ENCODE measurements at regions of chr2 and their contacts with region 1.

Region 1: DNA sequence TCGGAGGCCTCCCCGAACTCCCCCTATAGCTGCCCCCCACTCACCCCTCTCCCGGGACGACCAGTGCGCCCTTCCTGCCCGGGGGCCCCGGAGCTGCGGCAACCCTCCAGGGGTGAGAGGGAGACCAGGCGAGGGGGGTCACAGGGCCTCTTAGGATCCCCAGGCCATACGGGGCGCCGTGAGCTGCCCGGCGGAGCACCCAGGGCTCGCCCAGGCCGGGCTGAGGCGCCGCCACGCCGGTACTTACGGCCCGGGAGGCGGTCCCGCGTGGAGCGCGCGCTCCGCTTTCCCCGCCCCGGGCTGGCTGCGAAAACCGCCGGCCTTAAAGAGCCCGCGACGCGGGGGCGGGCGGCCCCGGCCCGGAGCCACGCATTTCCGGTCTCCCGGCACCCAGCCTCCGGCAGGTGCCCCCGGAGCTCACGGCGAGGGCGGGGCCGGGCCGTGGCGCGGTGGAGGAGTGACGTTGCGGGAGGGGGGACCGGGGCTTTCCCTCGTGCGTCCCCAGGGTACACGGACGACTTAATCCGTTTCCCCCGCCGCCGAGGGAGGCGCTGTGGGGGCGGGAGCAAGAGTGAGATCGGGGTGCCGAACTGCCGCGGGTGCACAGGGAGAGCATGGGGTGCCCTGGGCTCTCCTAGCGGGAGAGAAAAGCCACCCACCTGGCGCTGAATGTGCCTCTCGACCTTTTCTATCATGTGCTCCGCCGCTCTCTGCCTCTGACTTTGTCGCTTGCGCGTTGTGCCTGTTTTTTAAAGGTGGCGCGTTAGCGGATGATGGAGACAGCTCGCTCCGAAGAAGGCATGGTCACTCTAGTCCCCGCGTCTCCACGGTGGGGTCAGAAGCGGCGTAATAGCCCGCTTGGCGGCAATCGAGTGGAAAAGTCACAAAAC is at the start of gene METTL21A:
- DNase-seq: peak; percentile 93
- H3K27ac ChIP-seq: peak within 1 kb of the TSS; percentile 96
- CTCF ChIP-seq: peak; percentile 47

Region 2: DNA sequence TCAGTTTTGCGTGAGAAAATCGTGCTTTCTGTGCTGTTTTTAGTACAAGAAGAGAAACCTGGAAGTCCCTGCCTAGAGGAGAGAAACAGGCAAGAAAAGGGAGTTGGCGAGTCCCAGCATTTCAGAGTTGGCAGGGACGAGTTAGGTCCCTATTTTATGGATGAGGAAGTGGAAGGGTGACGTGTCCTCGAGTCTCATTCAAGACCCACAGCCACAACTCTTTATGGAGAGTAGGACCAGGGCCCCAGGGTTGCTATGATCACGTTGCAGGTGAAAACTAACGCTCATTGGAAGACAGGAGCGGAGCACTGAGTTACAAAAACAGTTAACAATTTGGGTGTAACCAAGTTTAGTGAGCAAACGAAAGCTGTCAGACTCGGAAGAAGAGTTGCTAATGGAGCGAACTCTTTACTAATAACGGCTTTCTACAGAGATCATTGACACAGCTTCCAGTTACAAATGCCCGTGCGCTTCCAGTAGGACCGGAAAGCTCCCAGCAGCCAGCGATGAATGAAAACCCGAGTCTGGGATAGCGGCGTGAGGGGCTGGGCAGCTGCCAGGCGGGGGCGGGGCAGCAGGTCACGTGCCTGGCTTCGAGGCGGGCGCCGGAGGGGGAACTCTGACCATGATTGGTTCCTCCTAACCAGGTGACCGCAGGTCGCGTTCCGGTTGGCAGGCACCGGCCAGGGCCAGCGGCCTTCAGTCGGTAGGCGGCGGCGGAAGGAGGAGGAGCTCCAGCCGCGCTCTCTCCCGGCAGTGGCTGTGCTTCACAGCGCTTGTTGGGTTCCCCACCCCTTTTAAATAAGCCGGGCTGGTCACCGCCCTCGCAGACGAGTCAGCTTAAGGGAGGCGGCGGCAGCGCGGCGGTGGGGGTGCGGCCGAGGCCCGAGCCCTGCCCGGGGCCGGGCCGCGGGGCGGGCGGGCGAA is 85.8 kb after region 1 on chr2 and contains the start of gene CCNYL1:
- CTCF ChIA-PET with region 1: interaction called, 12 read pairs
- POLR2A ChIA-PET with region 1: interaction called, 12 read pairs
- DNase-seq: peak; percentile 99
- H3K27ac ChIP-seq: peak within 1 kb of the TSS; percentile 92
- CTCF ChIP-seq: no peak

Region 3: GRCh38 chr2:207725873-207726578 is 100.8 kb after region 1 on chr2:
- CTCF ChIA-PET with region 1: interaction called, 10 read pairs
- POLR2A ChIA-PET with region 1: interaction called, 3 read pairs
- DNase-seq: no peak
- H3K27ac ChIP-seq: no peak overlapping the region
- CTCF ChIP-seq: no peak

Region 4: DNA sequence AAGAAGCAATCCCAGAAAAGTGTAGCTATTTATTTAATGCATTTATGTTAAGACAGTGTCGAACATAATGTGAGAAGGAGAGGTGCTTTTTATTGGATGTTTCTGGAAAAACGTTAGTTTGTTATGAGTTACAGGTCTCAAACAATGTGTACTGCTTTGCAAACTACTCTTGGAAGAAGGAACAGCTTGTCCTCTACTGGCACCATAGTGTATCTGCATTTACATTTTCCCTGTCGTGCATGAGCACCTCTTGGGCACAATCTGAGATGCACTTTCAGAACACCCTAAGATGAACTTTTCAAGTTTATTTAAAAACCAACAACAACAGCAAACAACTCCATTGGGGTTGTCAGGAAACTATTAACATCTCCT is 109.0 kb after region 1 on chr2:
- CTCF ChIA-PET with region 1: interaction called, 14 read pairs
- POLR2A ChIA-PET with region 1: no interaction called
- DNase-seq: no peak
- H3K27ac ChIP-seq: no peak overlapping the region
- CTCF ChIP-seq: peak; percentile 57

Region 5: GRCh38 chr2:207939342-207940108 is 314.3 kb after region 1 on chr2:
- CTCF ChIA-PET with region 1: no interaction called
- POLR2A ChIA-PET with region 1: no interaction called
- DNase-seq: peak; percentile 9
- H3K27ac ChIP-seq: no peak overlapping the region
- CTCF ChIP-seq: no peak

Measured in RWPE1 (cell line).